ENCODE measurements at regions of chr15 and their contacts with region 1.

Region 1: GRCh38 chr15:76931397-76932007 is at the start of gene RCN2:
- DNase-seq: peak; percentile 96
- H3K4me3 ChIP-seq: peak within 1 kb of the TSS; percentile 82 to 85 (median 82)
- H3K27ac ChIP-seq: peak within 1 kb of the TSS; percentile 60
- H3K4me1 ChIP-seq: peaks cover 10% of the 10 kb centered on the region
- H3K27me3 ChIP-seq: peaks cover 0 to 1% of the 10 kb centered on the region in 2 experiments
- CTCF ChIP-seq: no peak
- POLR2A ChIP-seq: peak; percentile 88
- total RNA-seq, gene RCN2: 69.8 and 71.9 TPM in 2 replicates

Region 2: GRCh38 chr15:76905013-76905839 is 26.3 kb before region 1 on chr15 and contains the start of gene SCAPER:
- CTCF ChIA-PET with region 1: interaction called, 3 read pairs
- POLR2A ChIA-PET with region 1: interaction called, 3 read pairs
- dilution Hi-C with region 1: no loop called
- intact Hi-C with region 1: loop called (anchors 1 kb)
- DNase-seq: peak; percentile 92
- H3K4me3 ChIP-seq: peak within 1 kb of the TSS; percentile 29 to 98 (median 59)
- H3K27ac ChIP-seq: peak within 1 kb of the TSS; percentile 37
- H3K4me1 ChIP-seq: peaks cover 12% of the 10 kb centered on the region
- H3K27me3 ChIP-seq: no peaks in the 10 kb centered on the region
- CTCF ChIP-seq: no peak
- POLR2A ChIP-seq: peak; percentile 80
- total RNA-seq, gene SCAPER: 11.2 and 12.7 TPM in 2 replicates

Region 3: DNA sequence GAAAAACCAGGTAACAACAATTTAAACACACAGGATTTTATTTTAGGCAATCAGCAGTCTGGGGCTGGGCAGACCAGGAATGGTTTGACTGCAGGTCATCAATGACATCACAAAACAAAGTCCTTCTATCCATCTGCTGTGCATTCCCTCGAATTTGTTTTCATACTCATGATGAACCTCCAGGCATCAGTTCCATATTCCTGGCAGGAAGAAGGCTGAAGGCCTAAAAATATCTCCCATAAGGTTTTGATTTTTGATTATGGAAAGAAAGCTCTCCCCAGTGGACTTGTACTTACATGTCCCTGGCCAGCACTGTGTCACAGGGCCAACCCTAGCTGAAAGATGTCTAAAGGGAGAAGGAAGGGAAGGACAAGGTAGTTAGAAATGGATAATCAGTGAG is 381.0 kb after region 1 on chr15:
- CTCF ChIA-PET with region 1: no interaction called
- POLR2A ChIA-PET with region 1: no interaction called
- dilution Hi-C with region 1: no loop called
- intact Hi-C with region 1: no loop called
- DNase-seq: no peak
- H3K4me3 ChIP-seq: no peak overlapping the region
- H3K27ac ChIP-seq: no peak overlapping the region
- H3K4me1 ChIP-seq: no peaks in the 10 kb centered on the region
- H3K27me3 ChIP-seq: no peaks in the 10 kb centered on the region
- CTCF ChIP-seq: no peak
- POLR2A ChIP-seq: no peak